Posterior vena cava (tissue), 2 donors: ENCODE measurements at regions of chr10 and their contacts with region 1.

Region 1: DNA sequence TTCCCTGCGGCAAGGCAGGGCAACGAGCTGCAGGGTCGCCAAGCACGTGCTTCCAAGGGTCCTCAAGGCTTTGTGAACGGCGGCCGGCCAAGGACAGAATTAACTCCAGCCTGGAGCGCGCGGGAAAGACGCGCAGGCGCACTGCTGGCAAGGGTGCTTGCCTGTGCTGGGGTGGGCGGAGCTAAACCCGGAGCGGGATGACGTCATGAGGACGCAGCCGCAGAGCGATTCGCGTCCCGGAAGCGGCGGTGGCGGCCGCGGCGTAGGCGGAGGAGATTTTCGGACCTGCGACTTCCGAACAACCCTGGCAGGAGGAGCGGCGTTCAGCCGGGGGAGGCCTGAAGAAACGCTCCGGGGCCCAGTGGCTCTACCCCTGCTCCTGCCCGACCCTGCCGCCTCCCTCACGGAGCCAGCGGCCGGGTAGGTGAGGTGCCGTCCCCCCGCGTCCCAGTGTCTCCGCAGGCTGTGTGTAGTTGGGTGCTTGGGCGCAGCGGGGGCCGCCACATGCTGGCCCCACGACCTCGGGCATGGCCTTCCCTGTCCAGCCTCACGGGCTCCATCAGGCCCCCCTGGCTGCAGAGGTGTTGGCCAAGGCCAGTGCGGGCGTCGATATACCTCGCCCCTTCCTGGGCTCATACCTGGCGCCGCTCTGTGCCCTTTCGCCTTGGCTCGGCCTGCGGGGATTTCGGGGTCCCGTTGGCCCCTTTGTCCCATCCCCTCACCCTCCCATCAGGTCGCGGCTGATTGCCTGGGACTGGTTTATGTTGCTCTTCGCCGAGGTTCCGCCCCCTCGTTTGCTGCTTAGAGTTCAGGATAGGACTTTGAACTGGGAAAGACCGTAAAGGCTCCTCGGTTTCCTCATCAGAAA is at the start of gene ZFYVE27:
- DNase-seq: peak; percentile 99
- total RNA-seq, gene ZFYVE27: 15.8 to 16.0 TPM

Region 2: GRCh38 chr10:97686962-97687784 is 50.0 kb before region 1 on chr10 and contains the start of gene AVPI1:
- intact Hi-C with region 1: loop called in 1 of 2 experiments (anchors 5 kb)
- DNase-seq: peak; percentile 99
- total RNA-seq, gene AVPI1: 15.0 to 17.6 TPM

Region 3: DNA sequence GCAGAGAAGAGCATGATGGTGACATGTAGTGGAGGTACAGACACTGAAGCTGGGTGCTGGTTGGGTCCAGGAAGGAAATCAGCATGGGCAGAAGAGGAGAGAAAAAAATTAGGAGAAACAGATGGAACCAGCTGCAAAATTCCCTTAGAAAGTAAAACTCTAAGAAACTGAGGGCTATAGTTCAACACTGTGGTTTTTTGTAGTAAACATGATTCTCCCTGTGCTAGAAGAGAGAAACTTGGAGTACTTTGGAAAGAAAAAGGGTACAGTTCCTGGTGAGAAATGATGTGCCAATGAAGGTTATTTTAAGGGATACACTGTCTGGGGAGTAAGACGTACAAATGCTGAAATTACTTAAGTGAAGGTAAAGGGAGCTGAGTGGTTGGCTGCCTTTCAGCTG is 891.1 kb after region 1 on chr10:
- intact Hi-C with region 1: no loop called
- DNase-seq: no peak